Naive thymus-derived CD4-positive, alpha-beta T cell (primary cell): ENCODE measurements at regions of chr6 and their contacts with region 1.

Region 1: DNA sequence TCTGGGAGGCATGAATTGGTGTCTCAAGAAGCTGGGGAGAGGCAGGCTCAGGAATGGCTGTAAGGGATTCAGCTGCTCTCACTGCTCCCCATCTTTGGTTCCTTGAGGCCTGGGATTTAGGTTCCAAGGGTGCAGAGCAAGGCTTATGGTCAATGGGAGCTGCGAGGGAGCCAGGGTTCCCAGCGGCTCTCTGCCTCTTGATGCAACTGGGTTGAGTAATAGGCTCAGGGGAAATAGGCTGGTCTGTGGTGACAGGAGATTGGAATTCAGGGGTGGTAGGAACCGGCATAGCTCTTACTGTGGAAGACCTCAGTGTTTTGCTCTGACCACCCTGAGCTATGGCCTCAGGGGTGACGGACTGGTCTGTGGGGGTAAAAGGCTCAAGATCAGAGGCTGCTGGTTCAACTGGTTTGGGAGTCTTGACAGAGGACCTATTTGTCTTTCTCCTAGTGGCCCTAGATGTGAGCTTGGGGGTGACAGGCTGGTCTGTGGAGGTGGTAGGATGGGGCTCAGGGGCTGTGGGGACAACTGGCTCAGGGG is 13.1 kb upstream of the NRM start:
- DNase-seq: no peak
- ATAC-seq: no peak
- H3K4me3 ChIP-seq: no peak overlapping the region
- H3K4me3 Mint-ChIP-seq: no peak overlapping the region
- H3K27ac ChIP-seq: no peak overlapping the region
- H3K27ac Mint-ChIP-seq: peak overlapping the region in 2 of 9 donors; percentile 20 to 73
- H3K4me1 ChIP-seq: no peaks in the 10 kb centered on the region
- H3K4me1 Mint-ChIP-seq: peaks cover 0 to 22% (median 4%) of the 10 kb centered on the region in 7 donors
- H3K27me3 ChIP-seq: no peaks in the 10 kb centered on the region
- H3K27me3 Mint-ChIP-seq: no peaks in the 10 kb centered on the region

Region 2: GRCh38 chr6:30686908-30687658 is 16.8 kb before region 1 on chr6:
- CTCF ChIA-PET with region 1: no interaction called
- POLR2A ChIA-PET with region 1: interaction called, 13 read pairs
- intact Hi-C with region 1: no loop called
- DNase-seq: peak; percentile 34 to 89 (median 42)
- ATAC-seq: peak; percentile 58
- H3K4me3 ChIP-seq: peak overlapping the region; percentile 98
- H3K4me3 Mint-ChIP-seq: peak overlapping the region; percentile 90 to 100 (median 97)
- H3K27ac ChIP-seq: peak overlapping the region; percentile 95
- H3K27ac Mint-ChIP-seq: peak overlapping the region; percentile 88 to 99 (median 97)
- H3K4me1 ChIP-seq: peaks cover 21 to 31% of the 10 kb centered on the region in 2 donors
- H3K4me1 Mint-ChIP-seq: peaks cover 45 to 56% (median 46%) of the 10 kb centered on the region in 7 donors
- H3K27me3 ChIP-seq: no peaks in the 10 kb centered on the region
- H3K27me3 Mint-ChIP-seq: no peaks in the 10 kb centered on the region